ENCODE measurements at regions of chr3 and their contacts with region 1.

Region 1: GRCh38 chr3:131033480-131034080 is 6.9 kb downstream of the NEK11 start:
- DNase-seq: no peak
- ATAC-seq: peak; percentile 82
- H3K4me3 ChIP-seq: no peak overlapping the region
- H3K27ac ChIP-seq: no peak overlapping the region
- H3K4me1 ChIP-seq: no peaks in the 10 kb centered on the region
- H3K27me3 ChIP-seq: no peaks in the 10 kb centered on the region
- CTCF ChIP-seq: peak; percentile 48 to 67 (median 57); a peak in 5 of 6 replicates
- EP300 ChIP-seq: no peak
- POLR2A ChIP-seq: no peak
- RAD21 ChIP-seq: peak; percentile 71

Region 2: GRCh38 chr3:130654921-130655320 is 378.7 kb before region 1 on chr3:
- CTCF ChIA-PET with region 1: no interaction called
- POLR2A ChIA-PET with region 1: no interaction called
- RAD21 ChIA-PET with region 1: no interaction called
- SMC1A ChIA-PET with region 1: no interaction called
- in situ Hi-C with region 1: no loop called
- intact Hi-C with region 1: no loop called
- DNase-seq: no peak
- ATAC-seq: no peak; the same call in 2 of the 3 replicates
- H3K4me3 ChIP-seq: no peak overlapping the region
- H3K27ac ChIP-seq: no peak overlapping the region
- H3K4me1 ChIP-seq: no peaks in the 10 kb centered on the region
- H3K27me3 ChIP-seq: no peaks in the 10 kb centered on the region
- CTCF ChIP-seq: no peak
- EP300 ChIP-seq: no peak
- POLR2A ChIP-seq: no peak
- RAD21 ChIP-seq: no peak

Region 3: GRCh38 chr3:130733236-130733875 is 300.2 kb before region 1 on chr3:
- CTCF ChIA-PET with region 1: no interaction called
- POLR2A ChIA-PET with region 1: no interaction called
- RAD21 ChIA-PET with region 1: no interaction called
- SMC1A ChIA-PET with region 1: no interaction called
- in situ Hi-C with region 1: no loop called
- intact Hi-C with region 1: no loop called
- DNase-seq: no peak
- ATAC-seq: no peak
- H3K4me3 ChIP-seq: no peak overlapping the region
- H3K27ac ChIP-seq: no peak overlapping the region
- H3K4me1 ChIP-seq: no peaks in the 10 kb centered on the region
- H3K27me3 ChIP-seq: no peaks in the 10 kb centered on the region
- CTCF ChIP-seq: no peak
- EP300 ChIP-seq: no peak
- POLR2A ChIP-seq: no peak
- RAD21 ChIP-seq: no peak

Region 4: GRCh38 chr3:131020122-131020693 is 13.4 kb before region 1 on chr3:
- CTCF ChIA-PET with region 1: interaction called, 22 read pairs
- POLR2A ChIA-PET with region 1: interaction called, 3 read pairs
- RAD21 ChIA-PET with region 1: interaction called, 4 read pairs
- SMC1A ChIA-PET with region 1: interaction called, 12 read pairs
- in situ Hi-C with region 1: no loop called
- intact Hi-C with region 1: no loop called
- DNase-seq: no peak
- ATAC-seq: peak; percentile 75
- H3K4me3 ChIP-seq: no peak overlapping the region
- H3K27ac ChIP-seq: no peak overlapping the region
- H3K4me1 ChIP-seq: no peaks in the 10 kb centered on the region
- H3K27me3 ChIP-seq: no peaks in the 10 kb centered on the region
- CTCF ChIP-seq: no peak
- EP300 ChIP-seq: no peak
- POLR2A ChIP-seq: no peak
- RAD21 ChIP-seq: no peak

Region 5: DNA sequence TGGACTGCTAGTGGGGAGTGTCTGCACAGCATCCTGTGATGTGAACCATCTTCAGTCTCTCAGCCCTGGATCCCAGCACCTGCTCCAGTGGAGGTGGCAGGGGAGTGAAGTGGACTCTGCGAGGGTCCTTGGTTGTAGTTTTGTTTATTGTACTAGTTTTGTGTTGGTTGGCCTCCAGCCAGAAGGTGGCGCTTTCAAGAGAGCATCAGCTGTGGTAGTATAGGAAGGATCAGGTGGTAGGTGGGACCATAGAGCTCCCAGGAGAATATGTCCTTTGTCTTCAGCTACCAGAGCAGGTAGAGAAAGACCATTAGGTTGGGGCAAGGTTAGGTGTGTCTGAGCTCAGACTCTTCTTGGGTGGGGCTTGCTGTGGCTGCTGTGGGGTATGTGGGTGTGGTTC is 14.0 kb after region 1 on chr3:
- CTCF ChIA-PET with region 1: interaction called, 10 read pairs
- POLR2A ChIA-PET with region 1: no interaction called
- RAD21 ChIA-PET with region 1: interaction called, 4 read pairs
- SMC1A ChIA-PET with region 1: interaction called, 4 read pairs
- in situ Hi-C with region 1: no loop called
- intact Hi-C with region 1: no loop called
- DNase-seq: no peak
- ATAC-seq: peak; percentile 61
- H3K4me3 ChIP-seq: no peak overlapping the region
- H3K27ac ChIP-seq: no peak overlapping the region
- H3K4me1 ChIP-seq: no peaks in the 10 kb centered on the region
- H3K27me3 ChIP-seq: no peaks in the 10 kb centered on the region
- CTCF ChIP-seq: peak; percentile 3 to 25 (median 14); a peak in 1 of 6 replicates
- EP300 ChIP-seq: no peak
- POLR2A ChIP-seq: no peak
- RAD21 ChIP-seq: no peak

Region 6: GRCh38 chr3:131543714-131544113 is 510.1 kb after region 1 on chr3:
- CTCF ChIA-PET with region 1: interaction called, 7 read pairs
- POLR2A ChIA-PET with region 1: no interaction called
- RAD21 ChIA-PET with region 1: interaction called, 7 read pairs
- SMC1A ChIA-PET with region 1: no interaction called
- in situ Hi-C with region 1: no loop called
- intact Hi-C with region 1: loop called (anchors 10 kb)
- DNase-seq: no peak
- ATAC-seq: no peak
- H3K4me3 ChIP-seq: no peak overlapping the region
- H3K27ac ChIP-seq: no peak overlapping the region
- H3K4me1 ChIP-seq: no peaks in the 10 kb centered on the region
- H3K27me3 ChIP-seq: no peaks in the 10 kb centered on the region; a peak in 1 of 4 replicates
- CTCF ChIP-seq: no peak
- EP300 ChIP-seq: no peak
- POLR2A ChIP-seq: no peak
- RAD21 ChIP-seq: no peak

Region 7: GRCh38 chr3:131714585-131715220 is 681.1 kb after region 1 on chr3:
- CTCF ChIA-PET with region 1: no interaction called
- POLR2A ChIA-PET with region 1: no interaction called
- RAD21 ChIA-PET with region 1: no interaction called
- SMC1A ChIA-PET with region 1: no interaction called
- in situ Hi-C with region 1: no loop called
- intact Hi-C with region 1: loop called (anchors 10 kb)
- DNase-seq: peak; percentile 71
- ATAC-seq: peak; percentile 73
- H3K4me3 ChIP-seq: no peak overlapping the region
- H3K27ac ChIP-seq: peak overlapping the region; percentile 23; the same call in 1 of the 2 replicates
- H3K4me1 ChIP-seq: peaks cover 47% of the 10 kb centered on the region
- H3K27me3 ChIP-seq: no peaks in the 10 kb centered on the region
- CTCF ChIP-seq: no peak
- EP300 ChIP-seq: peak in 1 of 2 experiments; percentile 76; a peak in 2 of 4 replicates
- POLR2A ChIP-seq: no peak
- RAD21 ChIP-seq: peak; percentile 20; the same call in 1 of the 2 replicates

Region 8: DNA sequence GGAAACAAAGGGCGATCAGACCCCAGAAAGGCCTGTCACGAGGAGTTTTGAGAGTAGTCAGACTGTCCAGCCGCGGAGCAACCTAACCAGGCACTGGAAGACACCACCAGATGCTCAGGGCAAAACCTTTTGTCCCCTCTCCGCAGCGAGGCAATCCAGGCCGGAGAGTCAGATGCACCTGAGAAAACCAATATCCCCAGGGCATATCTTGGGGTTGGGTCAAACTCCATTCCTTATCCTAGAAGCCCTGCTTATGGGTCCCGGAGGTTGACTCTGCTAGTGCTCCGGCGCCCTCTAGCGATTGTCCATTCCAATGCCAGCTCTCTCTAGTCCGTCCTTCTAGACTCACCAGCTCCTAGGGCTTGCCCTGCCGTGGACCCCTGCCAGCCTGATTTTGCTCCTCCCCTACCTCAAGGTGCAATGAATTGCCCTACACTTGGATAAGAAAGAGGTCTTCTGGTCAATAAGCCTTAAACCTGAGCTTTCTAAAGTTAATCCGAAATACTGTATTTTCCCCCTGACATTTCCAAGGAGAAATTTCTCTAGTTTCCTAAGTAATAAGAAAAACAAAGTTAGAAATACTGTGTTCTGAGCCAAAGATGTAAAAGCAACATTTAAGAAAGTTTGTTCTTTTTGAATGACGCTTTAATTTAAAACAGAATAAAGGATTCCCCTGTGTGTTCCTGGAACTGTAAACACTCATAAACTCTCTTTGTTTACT is 995.8 kb after region 1 on chr3:
- CTCF ChIA-PET with region 1: interaction called, 18 read pairs
- POLR2A ChIA-PET with region 1: no interaction called
- RAD21 ChIA-PET with region 1: interaction called, 16 read pairs
- SMC1A ChIA-PET with region 1: interaction called, 3 read pairs
- in situ Hi-C with region 1: no loop called
- intact Hi-C with region 1: loop called (anchors 5 kb)
- DNase-seq: no peak
- ATAC-seq: peak; percentile 99
- H3K4me3 ChIP-seq: no peak overlapping the region
- H3K27ac ChIP-seq: no peak overlapping the region
- H3K4me1 ChIP-seq: no peaks in the 10 kb centered on the region
- H3K27me3 ChIP-seq: peaks cover 0 to 1% of the 10 kb centered on the region in 2 experiments; a peak in 1 of 4 replicates
- CTCF ChIP-seq: peak; percentile 89 to 92 (median 92); a peak in 5 of 6 replicates
- EP300 ChIP-seq: no peak
- POLR2A ChIP-seq: no peak
- RAD21 ChIP-seq: peak; percentile 94

Region 9: GRCh38 chr3:132180337-132180791 is 1146.8 kb after region 1 on chr3:
- CTCF ChIA-PET with region 1: interaction called, 5 read pairs
- POLR2A ChIA-PET with region 1: no interaction called
- RAD21 ChIA-PET with region 1: no interaction called
- SMC1A ChIA-PET with region 1: interaction called, 3 read pairs
- in situ Hi-C with region 1: no loop called
- intact Hi-C with region 1: loop called (anchors 5 kb)
- DNase-seq: peak; percentile 5
- ATAC-seq: peak; percentile 84
- H3K4me3 ChIP-seq: no peak overlapping the region
- H3K27ac ChIP-seq: no peak overlapping the region
- H3K4me1 ChIP-seq: no peaks in the 10 kb centered on the region
- H3K27me3 ChIP-seq: no peaks in the 10 kb centered on the region; a peak in 1 of 4 replicates
- CTCF ChIP-seq: peak; percentile 38 to 61 (median 46); a peak in 5 of 6 replicates
- EP300 ChIP-seq: no peak
- POLR2A ChIP-seq: no peak
- RAD21 ChIP-seq: peak; percentile 70

Measured in GM12878 (cell line).